Astrocyte of the cerebellum (primary cell): ENCODE measurements at regions of chr18 and their contacts with region 1.

Region 1: DNA sequence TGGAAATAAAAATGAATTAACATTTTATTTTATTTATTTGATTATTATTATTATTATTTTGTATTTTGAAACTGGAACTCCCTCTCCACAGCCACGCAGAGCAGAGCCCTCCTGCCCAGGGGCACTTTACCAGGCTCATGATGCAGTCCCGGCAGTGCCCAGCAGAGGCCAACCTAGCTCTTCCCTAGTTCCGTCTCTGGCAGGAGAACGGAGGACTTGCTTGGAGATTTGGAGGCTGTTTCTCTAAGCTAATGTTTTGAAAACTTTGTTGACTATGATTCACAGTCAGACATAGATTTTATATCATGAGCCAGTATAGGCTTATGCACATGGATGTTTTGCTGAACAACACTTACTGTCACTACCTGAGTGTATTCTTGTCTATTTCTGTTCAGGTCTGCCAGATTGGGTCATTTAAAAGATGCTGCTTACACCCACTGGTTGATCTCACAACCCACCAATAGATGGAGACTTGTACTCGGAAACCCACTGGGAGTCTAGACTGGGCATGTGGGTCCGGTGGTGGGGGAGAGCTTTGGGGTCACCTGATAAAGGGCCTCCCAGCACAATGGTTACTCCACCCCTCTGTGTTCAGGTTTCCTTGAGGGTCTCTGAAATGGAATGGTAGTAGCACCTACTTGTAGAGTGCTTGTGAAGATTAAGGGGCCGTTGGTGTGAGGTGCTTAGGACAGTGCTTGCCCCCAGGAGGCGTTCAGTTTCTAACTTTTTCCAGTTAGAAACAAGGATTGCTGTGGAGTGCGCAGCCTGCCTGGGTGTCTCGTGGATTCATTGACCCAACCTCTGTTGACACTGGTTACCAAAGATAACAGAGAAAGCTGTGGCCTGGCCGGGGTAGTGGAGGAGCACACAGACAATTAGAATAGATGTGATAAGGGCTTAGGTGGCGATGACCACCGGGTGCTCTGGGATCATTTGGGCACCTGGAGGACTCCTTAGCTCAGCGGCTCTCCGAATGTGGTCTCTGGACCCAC is 177.3 kb downstream of the HAUS1 start:
- DNase-seq: peak; percentile 69
- H3K4me3 ChIP-seq: no peak overlapping the region
- CTCF ChIP-seq: peak; percentile 99

Region 2: DNA sequence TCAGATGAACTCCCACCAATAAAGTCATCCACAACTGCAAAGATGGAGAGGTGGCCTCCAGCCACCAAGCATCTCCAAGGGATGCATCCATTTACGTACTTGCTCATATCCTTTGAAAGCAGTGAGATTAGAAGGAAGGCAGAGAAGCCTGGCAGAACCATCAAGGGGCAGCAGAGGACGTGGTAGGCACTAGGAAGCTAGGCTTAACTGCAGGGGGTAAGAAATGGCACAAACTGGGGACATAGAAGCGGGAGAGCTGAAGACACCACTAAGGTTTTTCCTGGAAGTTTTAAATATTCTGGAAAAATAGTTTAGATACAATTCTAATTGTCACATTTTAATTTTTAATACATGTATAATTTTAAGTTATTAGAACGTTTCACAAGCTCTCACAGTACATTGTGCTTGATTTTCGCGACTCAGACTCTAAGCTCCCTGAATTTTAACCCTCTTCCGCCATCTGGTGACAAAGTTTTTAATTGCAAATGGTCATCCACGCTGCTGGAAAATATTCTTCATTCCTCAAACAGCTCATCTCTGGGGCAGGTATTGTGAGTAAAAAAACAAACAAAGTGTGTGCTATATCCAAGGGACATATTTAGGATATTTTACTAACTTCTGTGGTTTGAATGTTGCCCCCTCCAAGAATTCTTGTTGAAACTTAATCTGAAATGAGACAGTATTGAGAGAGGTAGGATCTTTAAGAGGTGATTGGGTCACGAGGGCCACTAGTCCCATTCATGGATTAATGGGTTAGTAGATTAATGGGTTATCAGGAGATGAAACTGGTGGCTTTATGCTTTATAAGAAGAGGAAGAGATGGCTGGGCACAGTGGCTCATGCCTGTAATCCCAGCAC is 207.8 kb before region 1 on chr18:
- in situ Hi-C with region 1: no loop called
- DNase-seq: peak; percentile 51
- H3K4me3 ChIP-seq: no peak overlapping the region
- CTCF ChIP-seq: peak; percentile 57

Region 3: GRCh38 chr18:46369323-46369722 is 87.8 kb after region 1 on chr18:
- in situ Hi-C with region 1: loop called (anchors 5 kb)
- DNase-seq: no peak
- H3K4me3 ChIP-seq: no peak overlapping the region
- CTCF ChIP-seq: no peak